ENCODE measurements at regions of chr1 and their contacts with region 1.

Region 1: DNA sequence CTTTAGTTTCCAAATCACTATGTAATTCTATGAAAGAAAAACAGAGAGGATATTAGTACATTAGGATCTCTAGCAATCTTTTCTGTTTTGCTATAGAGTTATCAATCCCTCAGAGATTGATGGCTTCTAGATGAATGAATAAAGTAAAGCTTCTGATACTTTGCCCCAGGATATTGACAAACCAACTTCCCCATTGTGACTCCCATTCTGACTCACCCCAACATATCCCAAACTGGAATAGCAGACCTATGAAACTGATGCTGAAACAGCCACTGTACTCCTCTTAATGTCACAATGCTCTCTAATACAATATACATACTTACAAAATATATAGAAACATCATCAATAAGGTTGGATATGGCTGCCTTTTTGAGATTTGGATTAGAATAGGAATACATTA is 442.1 kb upstream of the NR5A2 start:
- DNase-seq: no peak
- ATAC-seq: no peak
- H3K4me3 ChIP-seq: no peak overlapping the region
- H3K27ac ChIP-seq: no peak overlapping the region
- H3K4me1 ChIP-seq: no peaks in the 10 kb centered on the region
- H3K27me3 ChIP-seq: no peaks in the 10 kb centered on the region

Region 2: DNA sequence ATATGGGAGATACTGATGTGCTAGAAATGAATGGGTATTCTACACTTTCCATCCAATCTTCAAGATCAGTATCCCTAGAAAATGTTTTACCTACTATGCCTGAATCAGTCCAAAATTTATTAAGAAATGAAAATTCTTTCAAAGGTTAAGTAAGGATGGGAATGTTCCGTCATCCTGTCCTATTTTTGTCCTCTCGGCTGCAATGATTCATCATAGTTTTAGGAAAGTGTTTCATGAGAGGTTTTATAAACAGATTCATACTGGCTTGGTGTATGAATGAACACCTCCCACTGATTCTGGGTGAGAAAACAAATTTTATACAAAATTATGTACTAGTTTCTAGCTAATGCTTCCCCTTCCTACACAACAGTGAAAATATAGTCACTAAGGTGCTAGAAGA is 62.5 kb before region 1 on chr1:
- intact Hi-C with region 1: loop called in 1 of 4 experiments (anchors 10 kb)
- DNase-seq: no peak
- ATAC-seq: no peak
- H3K4me3 ChIP-seq: no peak overlapping the region
- H3K27ac ChIP-seq: no peak overlapping the region
- H3K4me1 ChIP-seq: no peaks in the 10 kb centered on the region
- H3K27me3 ChIP-seq: no peaks in the 10 kb centered on the region